Dendritic cell treated with granulocyte-macrophage colony-stimulating factor and Interleukin-4, amounts not matched to agents 40 ng/mL and 50 ng/mL, for 4 days (primary cell): ENCODE measurements at regions of chr2 and their contacts with region 1.

Region 1: DNA sequence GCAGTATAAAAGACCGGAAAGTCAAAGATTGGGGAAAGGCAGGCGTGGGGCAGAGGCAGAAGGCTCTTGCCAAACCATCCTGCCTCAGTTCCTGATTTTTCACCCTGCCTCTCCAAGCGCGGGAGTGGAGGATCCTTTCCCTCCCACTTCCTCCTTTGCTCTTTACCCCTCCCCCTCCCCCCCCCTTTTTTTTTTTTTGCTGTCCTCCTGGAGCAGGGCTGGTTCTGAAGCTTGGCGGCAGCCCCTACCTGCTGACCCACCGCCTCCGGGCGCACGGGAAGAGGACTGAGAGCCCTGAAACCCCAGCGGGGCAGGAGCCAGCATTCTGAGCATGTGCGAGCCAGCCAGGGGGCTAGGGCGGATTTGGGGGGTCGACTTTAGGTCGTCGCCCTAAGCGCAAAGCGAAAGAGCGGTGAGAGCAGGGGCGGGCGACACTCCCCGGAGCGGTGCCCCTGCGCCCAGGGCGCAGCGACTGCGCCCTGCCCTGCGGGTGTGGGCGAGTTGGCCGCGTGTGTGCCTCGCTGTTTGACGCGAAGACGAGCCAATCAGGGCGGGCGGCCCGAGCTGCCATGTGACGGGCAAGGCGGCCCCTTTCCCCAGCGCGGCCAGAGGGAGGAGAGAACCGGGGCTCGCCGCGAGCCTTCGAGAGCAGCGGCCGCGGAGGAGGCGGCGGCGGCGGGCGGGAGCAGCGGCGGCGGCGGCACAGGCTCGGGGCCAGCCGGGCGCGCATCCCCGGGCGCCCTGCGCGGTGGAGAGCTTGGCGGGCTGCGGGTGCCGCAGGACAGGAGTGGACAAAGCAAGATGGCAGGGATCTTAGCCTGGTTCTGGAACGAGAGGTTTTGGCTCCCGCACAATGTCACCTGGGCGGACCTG is at the start of gene CERS6:
- H3K4me3 Mint-ChIP-seq: no peak within 1 kb of the TSS
- H3K27ac Mint-ChIP-seq: no peak within 1 kb of the TSS
- H3K4me1 Mint-ChIP-seq: peaks cover 31% of the 10 kb centered on the region
- H3K27me3 Mint-ChIP-seq: no peaks in the 10 kb centered on the region

Region 2: GRCh38 chr2:168246483-168247340 is 209.2 kb before region 1 on chr2:
- intact Hi-C with region 1: loop called (anchors 5 kb)
- H3K4me3 Mint-ChIP-seq: peak overlapping the region; percentile 76
- H3K27ac Mint-ChIP-seq: no peak overlapping the region
- H3K4me1 Mint-ChIP-seq: peaks cover 20% of the 10 kb centered on the region
- H3K27me3 Mint-ChIP-seq: peaks cover 8% of the 10 kb centered on the region

Region 3: DNA sequence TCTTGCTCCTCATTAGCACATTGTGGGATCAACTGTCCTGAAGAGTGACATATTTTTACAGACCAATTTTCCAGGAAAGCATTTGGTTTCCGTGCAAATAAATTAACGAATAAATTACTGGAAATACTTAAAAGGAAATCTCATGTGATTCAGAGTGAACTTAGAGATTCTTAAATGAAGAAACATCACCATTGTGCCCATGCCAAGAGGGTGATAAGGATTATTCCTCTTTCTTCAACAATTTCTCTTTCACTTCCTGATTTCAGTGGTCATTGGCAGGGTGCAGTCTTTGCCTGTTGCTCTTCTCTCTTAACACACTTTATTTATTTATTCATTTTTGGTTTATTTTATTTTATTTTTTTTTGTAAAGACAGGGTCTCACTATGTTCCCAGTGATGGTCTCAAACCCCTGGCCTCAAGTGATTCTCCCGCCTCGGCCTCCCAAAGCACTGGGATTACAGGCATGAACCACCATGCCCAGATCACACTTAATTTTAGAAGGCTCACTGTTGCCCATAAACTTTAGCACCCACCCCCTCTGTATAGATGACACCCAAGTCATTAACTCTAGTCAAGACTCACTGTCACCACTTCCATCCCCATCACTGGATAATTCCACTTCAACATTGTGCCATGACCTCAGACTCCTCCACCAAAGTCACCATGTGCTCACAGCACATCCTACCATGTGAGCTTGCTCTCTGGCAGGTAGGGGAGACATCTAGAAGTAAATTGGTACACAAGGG is 92.4 kb before region 1 on chr2:
- intact Hi-C with region 1: loop called (anchors 10 kb)
- H3K4me3 Mint-ChIP-seq: no peak overlapping the region
- H3K27ac Mint-ChIP-seq: no peak overlapping the region
- H3K4me1 Mint-ChIP-seq: peaks cover 37% of the 10 kb centered on the region
- H3K27me3 Mint-ChIP-seq: no peaks in the 10 kb centered on the region

Region 4: DNA sequence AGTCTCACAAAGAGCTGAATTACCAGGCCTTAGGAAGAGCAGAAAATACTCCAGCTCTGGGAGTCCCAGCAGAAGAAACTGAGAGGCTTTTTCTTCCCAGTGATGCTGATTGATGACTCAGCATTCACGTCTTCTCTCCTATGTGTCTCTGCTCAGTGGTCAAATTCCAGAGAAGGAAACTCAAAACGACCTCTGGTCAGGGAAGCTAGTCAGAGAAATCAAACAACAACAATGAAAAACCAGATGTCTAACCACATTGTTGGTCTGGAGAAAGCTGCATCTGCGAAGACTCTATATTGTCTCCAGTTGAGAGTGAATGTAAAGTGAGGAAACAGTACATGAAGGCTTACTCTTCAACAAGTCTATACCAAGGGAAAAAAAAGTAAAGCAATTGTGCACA is 28.4 kb before region 1 on chr2:
- intact Hi-C with region 1: no loop called
- H3K4me3 Mint-ChIP-seq: no peak overlapping the region
- H3K27ac Mint-ChIP-seq: no peak overlapping the region
- H3K4me1 Mint-ChIP-seq: peaks cover 7% of the 10 kb centered on the region
- H3K27me3 Mint-ChIP-seq: no peaks in the 10 kb centered on the region

Region 5: DNA sequence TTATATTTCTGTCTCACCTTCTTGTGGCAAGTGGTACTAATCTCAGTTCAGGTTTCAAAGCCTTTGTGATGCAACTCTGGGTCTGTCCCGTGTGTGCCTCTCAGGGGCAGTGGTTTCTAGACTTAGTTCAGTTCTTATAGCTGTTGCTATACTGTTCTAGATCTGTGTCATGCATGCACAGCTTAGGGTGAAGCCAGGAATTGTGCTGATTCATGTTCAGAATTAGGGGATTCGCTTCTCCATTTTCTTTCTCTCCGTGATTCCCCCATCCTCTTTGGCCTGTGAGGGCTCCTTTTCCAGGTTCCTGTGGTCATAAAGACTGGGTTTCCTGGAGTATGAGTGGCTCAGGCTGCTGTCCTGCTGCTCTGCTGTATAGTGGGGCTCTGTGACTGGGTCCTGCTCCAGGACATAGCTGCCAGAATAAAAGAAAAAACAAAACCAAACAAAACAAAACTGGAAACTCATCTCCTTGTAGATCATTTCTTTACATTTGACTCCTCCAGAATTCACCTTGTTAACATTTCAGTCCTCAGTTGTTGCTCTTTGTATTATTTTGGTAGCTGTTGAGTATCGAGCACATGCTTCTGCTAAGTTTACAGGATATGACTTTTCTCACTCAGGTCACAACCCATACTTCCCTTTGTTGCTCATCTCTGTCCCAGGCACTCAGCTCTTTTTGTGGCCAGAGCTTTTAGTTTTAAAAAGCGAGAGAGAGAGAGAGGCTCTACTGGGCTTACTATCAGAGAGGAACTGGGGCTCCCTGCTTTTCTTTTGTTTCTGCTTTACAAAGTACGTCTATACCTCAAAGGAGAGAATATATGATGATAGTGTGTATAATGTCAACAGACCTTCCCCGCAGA is 34.4 kb after region 1 on chr2:
- intact Hi-C with region 1: loop called (anchors 2 kb)
- H3K4me3 Mint-ChIP-seq: peak overlapping the region; percentile 76
- H3K27ac Mint-ChIP-seq: peak overlapping the region; percentile 78
- H3K4me1 Mint-ChIP-seq: peaks cover 26% of the 10 kb centered on the region
- H3K27me3 Mint-ChIP-seq: no peaks in the 10 kb centered on the region

Region 6: DNA sequence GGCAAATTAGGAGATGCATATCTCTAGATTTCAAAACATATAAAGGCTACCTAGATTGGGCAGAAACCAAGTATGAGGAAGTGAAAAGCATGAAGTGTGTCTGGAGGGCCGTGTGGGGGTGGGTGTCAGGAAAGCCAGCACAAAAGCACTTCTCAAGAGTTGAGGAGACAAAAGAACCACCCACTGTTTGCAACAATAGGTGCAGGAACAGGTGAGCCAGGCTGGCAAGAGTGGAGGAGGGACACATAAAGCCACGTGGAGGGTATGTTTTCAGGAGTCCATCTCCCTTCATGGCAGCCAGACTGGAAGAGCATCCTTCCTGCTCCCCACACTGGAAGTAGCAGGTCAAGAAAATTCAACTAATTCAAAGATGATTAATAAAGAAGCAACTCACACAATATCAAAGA is 96.6 kb after region 1 on chr2:
- intact Hi-C with region 1: loop called (anchors 5 kb)
- H3K4me3 Mint-ChIP-seq: no peak overlapping the region
- H3K27ac Mint-ChIP-seq: peak overlapping the region; percentile 54
- H3K4me1 Mint-ChIP-seq: peaks cover 57% of the 10 kb centered on the region
- H3K27me3 Mint-ChIP-seq: no peaks in the 10 kb centered on the region

Region 7: GRCh38 chr2:168635065-168635577 is 179.2 kb after region 1 on chr2:
- intact Hi-C with region 1: loop called (anchors 5 kb)
- H3K4me3 Mint-ChIP-seq: peak overlapping the region; percentile 64
- H3K27ac Mint-ChIP-seq: peak overlapping the region; percentile 79
- H3K4me1 Mint-ChIP-seq: peaks cover 36% of the 10 kb centered on the region
- H3K27me3 Mint-ChIP-seq: no peaks in the 10 kb centered on the region